Mammary epithelial cell (primary cell): ENCODE measurements at regions of chr13 and their contacts with region 1.

Region 1: GRCh38 chr13:51645154-51645650 is 60.9 kb downstream of the WDFY2 start:
- DNase-seq: peak; percentile 63
- H3K4me3 ChIP-seq: no peak overlapping the region
- H3K27ac ChIP-seq: peak overlapping the region; percentile 94
- H3K4me1 ChIP-seq: peaks cover 53% of the 10 kb centered on the region
- H3K27me3 ChIP-seq: no peaks in the 10 kb centered on the region
- CTCF ChIP-seq: no peak

Region 2: DNA sequence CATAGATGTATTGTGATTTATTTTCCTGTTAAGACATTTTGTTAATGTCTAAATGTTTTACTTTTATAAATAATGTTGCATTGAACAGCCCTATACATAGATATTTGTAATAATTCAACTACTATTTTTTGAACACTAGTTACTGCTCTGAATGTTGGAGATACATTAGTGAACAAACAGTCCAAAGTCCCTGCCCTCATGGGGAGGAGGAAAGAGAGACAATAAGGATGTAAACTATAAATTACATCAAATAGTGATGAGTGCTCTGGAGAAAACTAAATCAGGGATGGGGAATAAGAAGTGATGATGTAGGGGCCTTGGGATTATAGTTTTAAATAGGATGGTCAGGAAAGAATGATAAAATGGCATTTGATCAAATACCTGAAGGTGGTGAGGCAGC is 180.1 kb before region 1 on chr13:
- CTCF ChIA-PET with region 1: no interaction called
- dilution Hi-C with region 1: no loop called
- in situ Hi-C with region 1: no loop called
- intact Hi-C with region 1: no loop called
- DNase-seq: no peak
- H3K4me3 ChIP-seq: no peak overlapping the region
- H3K27ac ChIP-seq: no peak overlapping the region
- H3K4me1 ChIP-seq: no peaks in the 10 kb centered on the region
- H3K27me3 ChIP-seq: no peaks in the 10 kb centered on the region
- CTCF ChIP-seq: no peak

Region 3: GRCh38 chr13:51583875-51584730 is 61.1 kb before region 1 on chr13 and contains the start of gene WDFY2:
- CTCF ChIA-PET with region 1: no interaction called
- dilution Hi-C with region 1: no loop called
- in situ Hi-C with region 1: no loop called
- intact Hi-C with region 1: loop called (anchors 1 kb)
- DNase-seq: peak; percentile 100
- H3K4me3 ChIP-seq: peak within 1 kb of the TSS; percentile 89 to 96 (median 96)
- H3K27ac ChIP-seq: peak within 1 kb of the TSS; percentile 88
- H3K4me1 ChIP-seq: peaks cover 7% of the 10 kb centered on the region
- H3K27me3 ChIP-seq: no peaks in the 10 kb centered on the region
- CTCF ChIP-seq: no peak
- total RNA-seq, gene WDFY2: 20.7 to 32.9 TPM

Region 4: GRCh38 chr13:51612867-51613266 is 32.3 kb before region 1 on chr13:
- CTCF ChIA-PET with region 1: no interaction called
- dilution Hi-C with region 1: no loop called
- in situ Hi-C with region 1: no loop called
- intact Hi-C with region 1: no loop called
- DNase-seq: no peak
- H3K4me3 ChIP-seq: no peak overlapping the region
- H3K27ac ChIP-seq: no peak overlapping the region
- H3K4me1 ChIP-seq: no peaks in the 10 kb centered on the region
- H3K27me3 ChIP-seq: no peaks in the 10 kb centered on the region
- CTCF ChIP-seq: no peak

Region 5: GRCh38 chr13:51632591-51633362 is 12.4 kb before region 1 on chr13:
- CTCF ChIA-PET with region 1: interaction called, 23 read pairs
- dilution Hi-C with region 1: no loop called
- in situ Hi-C with region 1: no loop called
- intact Hi-C with region 1: loop called (anchors 2 kb)
- DNase-seq: peak; percentile 55
- H3K4me3 ChIP-seq: peak overlapping the region in 1 of 3 experiments; percentile 10
- H3K27ac ChIP-seq: peak overlapping the region; percentile 70
- H3K4me1 ChIP-seq: peaks cover 28% of the 10 kb centered on the region
- H3K27me3 ChIP-seq: no peaks in the 10 kb centered on the region
- CTCF ChIP-seq: no peak

Region 6: GRCh38 chr13:51679616-51680015 is 34.4 kb after region 1 on chr13:
- CTCF ChIA-PET with region 1: no interaction called
- dilution Hi-C with region 1: no loop called
- in situ Hi-C with region 1: no loop called
- intact Hi-C with region 1: loop called (anchors 5 kb)
- DNase-seq: no peak
- H3K4me3 ChIP-seq: no peak overlapping the region
- H3K27ac ChIP-seq: no peak overlapping the region
- H3K4me1 ChIP-seq: peaks cover 34% of the 10 kb centered on the region
- H3K27me3 ChIP-seq: no peaks in the 10 kb centered on the region
- CTCF ChIP-seq: no peak

Region 7: DNA sequence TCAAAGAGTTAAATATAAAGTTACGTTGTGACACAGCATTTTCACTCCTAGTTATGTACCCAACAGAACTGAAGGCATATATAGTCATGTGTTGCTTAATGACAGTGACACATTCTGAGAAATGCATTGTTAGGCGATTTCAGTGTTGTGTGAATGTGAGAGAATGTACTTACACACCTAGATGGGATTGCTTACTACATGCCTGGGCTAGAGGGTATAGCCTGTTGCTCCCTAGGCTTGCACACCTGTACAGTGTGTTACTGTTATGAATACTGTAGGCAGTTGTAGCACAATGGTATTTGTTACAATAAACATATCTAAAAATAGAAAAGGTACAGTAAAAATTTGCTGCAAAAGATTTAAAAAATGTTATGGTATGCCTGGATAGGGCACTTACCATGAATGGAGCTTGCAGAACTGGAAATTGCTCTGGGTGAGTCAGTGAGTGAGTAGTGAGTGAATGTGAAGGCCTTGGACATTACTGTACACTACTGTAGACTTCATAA is 69.5 kb after region 1 on chr13:
- CTCF ChIA-PET with region 1: no interaction called
- dilution Hi-C with region 1: no loop called
- in situ Hi-C with region 1: no loop called
- intact Hi-C with region 1: loop called (anchors 1 kb)
- DNase-seq: peak; percentile 88
- H3K4me3 ChIP-seq: no peak overlapping the region
- H3K27ac ChIP-seq: peak overlapping the region; percentile 97
- H3K4me1 ChIP-seq: peaks cover 25% of the 10 kb centered on the region
- H3K27me3 ChIP-seq: no peaks in the 10 kb centered on the region
- CTCF ChIP-seq: no peak

Region 8: GRCh38 chr13:51803422-51804294 is 158.5 kb after region 1 on chr13 and contains the start of gene DHRS12:
- CTCF ChIA-PET with region 1: no interaction called
- dilution Hi-C with region 1: no loop called
- in situ Hi-C with region 1: no loop called
- intact Hi-C with region 1: loop called (anchors 5 kb)
- DNase-seq: peak; percentile 80
- H3K4me3 ChIP-seq: peak within 1 kb of the TSS; percentile 73 to 84 (median 75)
- H3K27ac ChIP-seq: peak within 1 kb of the TSS; percentile 87
- H3K4me1 ChIP-seq: peaks cover 22% of the 10 kb centered on the region
- H3K27me3 ChIP-seq: no peaks in the 10 kb centered on the region
- CTCF ChIP-seq: peak in 1 of 2 donors; percentile 16
- total RNA-seq, gene DHRS12: 5.5 to 8.7 TPM